ENCODE measurements at regions of chr9 and their contacts with region 1.

Region 1: DNA sequence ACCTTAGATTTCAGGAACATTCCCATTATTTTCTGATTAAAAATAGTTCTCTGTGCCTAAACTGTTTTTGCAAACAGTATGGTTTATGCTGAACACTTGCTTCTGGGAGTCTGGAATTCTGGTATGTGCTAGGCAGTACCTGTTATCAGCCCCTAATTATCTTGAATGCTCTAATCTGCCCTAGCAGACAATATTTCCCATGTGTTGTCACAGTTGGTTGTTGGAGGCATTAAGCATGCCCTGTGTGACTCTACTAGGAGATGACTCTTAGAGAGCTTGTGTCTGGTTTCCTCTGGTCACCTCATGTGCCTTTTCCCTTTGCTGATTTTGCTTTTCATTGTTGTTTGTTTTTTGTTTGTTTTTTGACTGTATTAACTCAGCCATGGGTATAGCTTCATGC is 36.6 kb downstream of the UHRF2 start:
- DNase-seq: peak; percentile 42
- H3K4me3 ChIP-seq: no peak overlapping the region
- H3K27ac ChIP-seq: peak overlapping the region; percentile 66
- H3K4me1 ChIP-seq: peaks cover 38% of the 10 kb centered on the region
- H3K27me3 ChIP-seq: no peaks in the 10 kb centered on the region
- CTCF ChIP-seq: no peak
- POLR2A ChIP-seq: no peak

Region 2: DNA sequence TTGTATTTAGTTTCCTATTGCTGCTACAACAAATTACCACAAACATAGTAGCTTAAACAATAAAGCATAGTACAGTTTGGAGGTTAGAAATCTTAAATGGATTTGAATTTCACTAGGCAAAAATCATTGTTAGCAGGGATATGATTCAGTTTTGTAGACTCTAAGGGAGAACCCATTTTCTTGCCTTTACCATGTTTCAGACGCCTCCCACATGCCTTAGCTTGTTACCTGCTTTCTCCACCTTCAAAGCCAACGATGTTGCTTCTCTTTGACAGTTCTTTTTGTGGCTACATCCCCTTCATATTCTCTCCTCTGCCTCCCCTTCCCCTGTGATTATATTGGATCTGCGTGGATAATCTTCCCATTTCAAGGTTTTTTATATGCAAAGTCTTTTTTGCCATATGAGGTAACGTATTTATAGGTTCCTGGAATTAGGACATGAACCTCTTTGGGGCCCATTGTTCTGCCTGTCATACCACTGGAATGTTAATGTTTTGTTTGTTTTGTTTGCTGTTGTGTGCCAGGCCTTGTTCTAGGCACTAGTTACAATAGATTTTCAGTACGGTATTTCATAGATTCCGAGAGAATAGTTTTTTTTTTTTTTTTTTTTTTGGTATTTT is 17.5 kb after region 1 on chr9:
- CTCF ChIA-PET with region 1: interaction called, 3 read pairs
- POLR2A ChIA-PET with region 1: interaction called, 3 read pairs
- dilution Hi-C with region 1: no loop called
- intact Hi-C with region 1: loop called (anchors 2 kb)
- DNase-seq: peak; percentile 20
- H3K4me3 ChIP-seq: no peak overlapping the region
- H3K27ac ChIP-seq: peak overlapping the region; percentile 64
- H3K4me1 ChIP-seq: peaks cover 8% of the 10 kb centered on the region
- H3K27me3 ChIP-seq: no peaks in the 10 kb centered on the region
- CTCF ChIP-seq: no peak
- POLR2A ChIP-seq: no peak